ENCODE measurements at regions of chr3 and their contacts with region 1.

Region 1: DNA sequence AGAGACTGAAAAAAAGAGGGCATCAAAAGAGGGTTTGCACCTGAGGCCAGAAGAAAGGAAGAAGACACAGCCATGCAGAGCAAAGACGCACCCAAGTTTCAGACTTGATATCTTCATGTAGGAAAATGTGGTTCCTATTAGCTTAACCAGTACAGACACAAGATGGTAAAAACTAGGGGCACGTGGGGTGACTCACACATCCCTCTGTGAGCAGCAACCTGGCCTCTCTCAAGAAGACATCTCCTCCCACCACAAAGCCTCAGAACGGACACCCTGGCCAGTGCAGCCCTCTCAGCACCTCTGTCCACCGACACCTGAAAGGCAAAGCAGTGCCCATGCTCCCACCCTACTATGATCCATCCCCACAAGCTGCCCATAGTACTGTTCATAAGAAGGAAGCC is 33.3 kb downstream of the GLB1 start:
- DNase-seq: no peak
- H3K4me3 Mint-ChIP-seq: peak overlapping the region; percentile 2
- H3K27ac Mint-ChIP-seq: peak overlapping the region; percentile 93
- H3K4me1 Mint-ChIP-seq: peaks cover 57% of the 10 kb centered on the region
- H3K27me3 Mint-ChIP-seq: no peaks in the 10 kb centered on the region

Region 2: GRCh38 chr3:32733631-32734229 is 329.9 kb before region 1 on chr3:
- intact Hi-C with region 1: loop called (anchors 5 kb)
- DNase-seq: no peak
- H3K4me3 Mint-ChIP-seq: no peak overlapping the region
- H3K27ac Mint-ChIP-seq: no peak overlapping the region
- H3K4me1 Mint-ChIP-seq: no peaks in the 10 kb centered on the region
- H3K27me3 Mint-ChIP-seq: no peaks in the 10 kb centered on the region

Region 3: GRCh38 chr3:32960404-32961170 is 103.1 kb before region 1 on chr3:
- intact Hi-C with region 1: loop called (anchors 1 kb)
- DNase-seq: no peak
- H3K4me3 Mint-ChIP-seq: peak overlapping the region; percentile 34
- H3K27ac Mint-ChIP-seq: peak overlapping the region; percentile 97
- H3K4me1 Mint-ChIP-seq: peaks cover 56% of the 10 kb centered on the region
- H3K27me3 Mint-ChIP-seq: no peaks in the 10 kb centered on the region

Region 4: GRCh38 chr3:33030802-33031201 is 32.8 kb before region 1 on chr3:
- intact Hi-C with region 1: loop called (anchors 1 kb)
- DNase-seq: peak; percentile 50
- H3K4me3 Mint-ChIP-seq: peak overlapping the region; percentile 12
- H3K27ac Mint-ChIP-seq: peak overlapping the region; percentile 49
- H3K4me1 Mint-ChIP-seq: peaks cover 32% of the 10 kb centered on the region
- H3K27me3 Mint-ChIP-seq: no peaks in the 10 kb centered on the region

Region 5: GRCh38 chr3:33074217-33075067 is 10.8 kb after region 1 on chr3:
- intact Hi-C with region 1: loop called (anchors 1 kb)
- DNase-seq: peak; percentile 43
- H3K4me3 Mint-ChIP-seq: no peak overlapping the region
- H3K27ac Mint-ChIP-seq: no peak overlapping the region
- H3K4me1 Mint-ChIP-seq: peaks cover 42% of the 10 kb centered on the region
- H3K27me3 Mint-ChIP-seq: no peaks in the 10 kb centered on the region

Region 6: GRCh38 chr3:33113772-33114621 is 50.3 kb after region 1 on chr3 and contains the start of gene CRTAP:
- intact Hi-C with region 1: loop called (anchors 5 kb)
- DNase-seq: peak; percentile 78
- H3K4me3 Mint-ChIP-seq: peak within 1 kb of the TSS; percentile 87
- H3K27ac Mint-ChIP-seq: peak within 1 kb of the TSS; percentile 74
- H3K4me1 Mint-ChIP-seq: peaks cover 26% of the 10 kb centered on the region
- H3K27me3 Mint-ChIP-seq: no peaks in the 10 kb centered on the region
- total RNA-seq, gene CRTAP: 30.3 and 33.2 TPM in 2 replicates

Measured in activated T-helper 1 cell treated with anti-CD3 and anti-CD28 coated beads, Interleukin-12 subunit alpha, Interleukin-12 subunit beta, Interleukin-2, Interleukin-4 antibody, amounts not matched to agents 30 ng/mL and 10 ng/mL and 1 ng/mL, durations not matched to agents 14 hours and 24 hours and 36 hours (primary cell).